ENCODE measurements at regions of chr19 and their contacts with region 1.

Region 1: DNA sequence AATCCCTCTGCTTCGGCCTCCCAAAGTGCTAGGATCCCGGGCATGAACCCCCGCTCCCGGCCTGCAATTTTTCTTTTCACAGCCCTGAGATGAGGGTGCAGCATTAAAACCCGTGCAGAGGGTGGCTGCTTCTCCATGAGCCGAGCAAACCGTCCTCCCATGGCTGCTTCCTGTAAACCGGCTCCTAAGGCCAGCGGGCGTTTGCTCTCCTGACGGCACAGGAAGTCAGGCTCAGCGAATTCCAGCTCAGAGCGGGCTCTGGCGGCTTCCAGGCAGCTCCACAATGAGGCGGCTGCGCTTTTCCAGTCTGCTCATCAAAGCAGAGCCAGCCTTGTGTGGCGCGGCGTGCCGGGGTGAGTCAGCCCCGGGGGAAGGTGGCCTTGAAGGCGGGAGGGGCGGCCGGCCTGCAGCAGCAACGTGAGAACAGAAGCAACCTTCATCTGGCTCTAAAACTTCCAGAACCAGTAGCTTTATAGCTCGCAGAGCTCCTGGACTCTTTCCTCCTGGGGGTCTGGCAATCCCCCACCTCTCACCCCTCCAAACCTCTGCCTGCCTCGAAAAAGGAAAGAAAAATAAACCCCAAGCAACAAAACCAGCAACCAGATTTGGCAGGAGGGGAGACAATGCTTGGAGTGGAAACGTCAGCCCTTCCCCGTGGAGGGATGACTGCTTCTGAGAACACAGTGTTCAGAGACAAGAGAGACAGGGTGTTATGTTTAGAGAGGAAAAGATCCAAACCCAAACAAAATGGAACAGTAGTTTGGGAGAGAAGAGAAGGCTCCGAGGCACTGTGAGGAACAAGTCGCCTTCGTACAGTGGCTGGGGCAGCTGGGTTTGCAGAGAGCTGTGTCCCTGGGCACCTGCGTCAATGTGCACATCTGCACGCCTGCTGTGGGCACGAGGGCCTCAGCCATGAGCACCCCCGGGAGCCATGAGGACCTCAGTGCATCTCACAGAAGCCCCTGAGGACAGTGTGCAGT is 67.8 kb downstream of the GADD45B start:
- DNase-seq: peak; percentile 91
- H3K4me3 ChIP-seq: peak overlapping the region; percentile 42; the same call in 1 of the 2 replicates
- H3K27ac ChIP-seq: peak overlapping the region; percentile 98
- H3K4me1 ChIP-seq: peaks cover 47% of the 10 kb centered on the region
- H3K27me3 ChIP-seq: no peaks in the 10 kb centered on the region
- CTCF ChIP-seq: no peak

Region 2: DNA sequence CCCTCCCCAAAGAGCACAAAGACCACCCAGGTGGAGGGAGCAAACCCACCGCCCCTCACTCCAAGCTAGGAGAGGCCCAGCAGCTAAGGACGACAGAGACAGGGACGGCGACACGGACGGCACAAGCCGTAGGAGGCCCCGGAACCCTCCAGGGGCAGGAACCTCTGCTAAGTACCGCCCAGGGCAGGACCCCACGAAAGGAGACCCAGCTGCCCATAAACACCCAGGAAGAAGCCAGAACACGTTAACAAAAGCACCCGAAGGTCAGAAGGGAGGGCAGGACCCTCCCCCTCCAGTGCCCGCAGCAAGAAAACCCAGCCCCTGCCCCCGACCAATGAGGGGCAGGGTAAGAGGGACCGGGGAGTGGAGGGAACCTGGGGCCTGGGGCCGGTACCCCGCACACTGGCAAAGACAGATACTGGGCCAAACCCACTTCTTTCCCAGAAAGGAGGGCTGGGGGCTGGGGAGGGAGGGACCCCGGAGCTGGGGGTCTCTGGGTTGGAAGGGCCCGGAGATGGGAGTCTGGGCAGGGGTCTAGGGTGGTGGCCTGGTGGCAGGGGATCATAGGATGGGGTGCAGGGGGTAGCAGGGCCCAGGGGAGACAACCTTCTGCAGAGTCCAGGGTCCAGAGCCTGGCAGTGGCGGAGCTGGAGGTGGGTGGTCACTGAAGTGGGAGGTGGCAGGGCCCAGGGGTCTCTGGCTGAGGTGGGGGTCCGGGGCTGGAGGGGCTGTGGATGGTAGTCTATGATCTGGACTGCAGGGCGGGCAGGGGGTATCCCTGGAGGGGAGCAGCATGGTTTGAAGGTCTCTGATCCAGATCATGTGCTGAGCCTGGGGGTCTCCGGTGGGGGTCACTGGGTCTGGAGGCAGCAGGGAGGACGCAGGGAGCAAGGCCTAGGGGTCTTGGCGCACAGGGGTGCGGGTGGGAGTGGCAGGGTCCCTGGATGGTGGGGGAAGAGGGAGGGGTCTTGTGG is 530.5 kb before region 1 on chr19:
- CTCF ChIA-PET with region 1: no interaction called
- POLR2A ChIA-PET with region 1: no interaction called
- intact Hi-C with region 1: no loop called
- DNase-seq: no peak
- H3K4me3 ChIP-seq: no peak overlapping the region
- H3K27ac ChIP-seq: no peak overlapping the region
- H3K4me1 ChIP-seq: no peaks in the 10 kb centered on the region; the same call in 1 of the 2 replicates
- H3K27me3 ChIP-seq: no peaks in the 10 kb centered on the region
- CTCF ChIP-seq: no peak

Region 3: GRCh38 chr19:2494444-2495129 is 49.2 kb before region 1 on chr19:
- CTCF ChIA-PET with region 1: no interaction called
- POLR2A ChIA-PET with region 1: interaction called, 7 read pairs
- intact Hi-C with region 1: loop called (anchors 1 kb)
- DNase-seq: peak; percentile 32 to 50
- H3K4me3 ChIP-seq: peak overlapping the region; percentile 62
- H3K27ac ChIP-seq: peak overlapping the region; percentile 75
- H3K4me1 ChIP-seq: peaks cover 37% of the 10 kb centered on the region
- H3K27me3 ChIP-seq: no peaks in the 10 kb centered on the region
- CTCF ChIP-seq: no peak

Region 4: DNA sequence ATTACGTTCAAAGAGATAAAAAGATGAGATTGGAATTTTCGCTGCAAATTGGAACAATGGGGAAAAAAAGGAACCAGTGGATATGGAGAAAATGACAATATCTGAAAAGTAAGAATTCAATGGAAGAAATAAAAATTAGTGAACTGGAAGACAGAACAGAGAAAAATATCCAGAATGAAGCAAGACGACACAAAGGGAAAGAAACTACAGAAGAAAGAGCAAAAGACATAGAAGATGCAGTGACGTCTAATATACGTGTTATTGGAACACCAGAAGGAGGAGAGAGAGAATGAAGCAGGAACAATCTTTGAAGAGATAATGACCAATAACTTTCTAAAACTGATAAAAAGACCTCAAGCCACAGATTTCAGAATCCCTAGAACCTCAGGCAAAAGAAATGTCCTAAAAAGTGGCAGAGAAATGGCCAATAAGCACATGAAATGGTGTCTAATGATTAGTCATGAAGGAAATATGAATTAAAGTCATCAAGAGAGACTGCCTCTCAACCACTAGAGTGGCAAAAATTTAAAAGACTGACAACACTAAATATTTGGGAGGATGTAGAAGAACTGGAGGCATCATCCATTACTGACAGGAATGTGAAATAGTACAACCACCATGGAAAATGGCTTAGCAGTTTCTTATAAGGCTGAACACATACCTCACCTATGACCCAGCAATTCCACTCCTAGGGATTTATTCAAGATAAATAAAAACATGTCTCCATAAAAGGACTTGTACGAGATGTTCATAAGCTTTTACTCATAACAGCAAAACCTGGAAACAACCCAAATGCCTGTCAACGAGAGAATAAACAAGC is 11.3 kb before region 1 on chr19:
- CTCF ChIA-PET with region 1: interaction called, 3 read pairs
- POLR2A ChIA-PET with region 1: interaction called, 10 read pairs
- intact Hi-C with region 1: loop called (anchors 1 kb)
- DNase-seq: peak in 1 of 2 experiments; percentile 96
- H3K4me3 ChIP-seq: no peak overlapping the region
- H3K27ac ChIP-seq: peak overlapping the region; percentile 99
- H3K4me1 ChIP-seq: peaks cover 74% of the 10 kb centered on the region
- H3K27me3 ChIP-seq: no peaks in the 10 kb centered on the region
- CTCF ChIP-seq: no peak

Region 5: DNA sequence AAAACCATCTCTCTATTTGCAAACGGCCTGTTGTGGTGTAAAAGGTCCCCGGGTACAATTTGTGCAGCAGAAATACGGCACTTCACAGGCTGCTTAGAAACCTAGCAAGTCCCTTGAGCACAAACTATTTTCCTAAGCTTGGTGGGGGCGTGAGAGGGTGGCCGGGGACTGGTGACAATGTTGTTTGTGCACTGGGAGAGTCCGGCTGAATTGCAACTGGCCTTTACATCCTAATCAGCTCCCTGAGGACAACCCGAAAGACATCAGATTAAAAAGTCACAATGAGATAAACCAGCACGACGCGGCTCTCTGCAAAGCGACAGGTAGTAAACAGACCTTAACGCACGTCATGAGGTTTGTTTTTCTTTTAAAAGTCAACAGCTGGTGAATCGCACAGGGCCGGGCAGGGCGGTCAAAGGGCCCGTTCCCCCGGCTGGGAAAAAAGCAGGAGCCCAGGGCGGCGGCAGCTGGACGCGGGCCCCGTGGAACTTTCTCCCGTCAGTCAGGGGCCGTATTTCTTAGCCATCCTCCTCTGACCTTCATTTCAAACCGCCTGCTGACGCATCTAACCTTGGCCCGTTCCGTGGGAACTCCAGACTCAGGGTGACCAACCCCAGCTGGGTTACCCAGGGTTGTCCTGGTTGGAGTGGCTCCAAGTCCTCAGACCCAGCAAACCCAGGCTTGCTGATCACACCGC is 44.5 kb after region 1 on chr19:
- CTCF ChIA-PET with region 1: no interaction called
- POLR2A ChIA-PET with region 1: no interaction called
- intact Hi-C with region 1: no loop called
- DNase-seq: no peak
- H3K4me3 ChIP-seq: no peak overlapping the region
- H3K27ac ChIP-seq: no peak overlapping the region
- H3K4me1 ChIP-seq: no peaks in the 10 kb centered on the region
- H3K27me3 ChIP-seq: no peaks in the 10 kb centered on the region
- CTCF ChIP-seq: no peak

Region 6: GRCh38 chr19:2602391-2603181 is 58.8 kb after region 1 on chr19:
- CTCF ChIA-PET with region 1: interaction called, 10 read pairs
- POLR2A ChIA-PET with region 1: no interaction called
- intact Hi-C with region 1: no loop called
- DNase-seq: peak; percentile 56 to 59
- H3K4me3 ChIP-seq: peak overlapping the region; percentile 26; the same call in 1 of the 2 replicates
- H3K27ac ChIP-seq: no peak overlapping the region
- H3K4me1 ChIP-seq: no peaks in the 10 kb centered on the region
- H3K27me3 ChIP-seq: no peaks in the 10 kb centered on the region
- CTCF ChIP-seq: no peak

Region 7: DNA sequence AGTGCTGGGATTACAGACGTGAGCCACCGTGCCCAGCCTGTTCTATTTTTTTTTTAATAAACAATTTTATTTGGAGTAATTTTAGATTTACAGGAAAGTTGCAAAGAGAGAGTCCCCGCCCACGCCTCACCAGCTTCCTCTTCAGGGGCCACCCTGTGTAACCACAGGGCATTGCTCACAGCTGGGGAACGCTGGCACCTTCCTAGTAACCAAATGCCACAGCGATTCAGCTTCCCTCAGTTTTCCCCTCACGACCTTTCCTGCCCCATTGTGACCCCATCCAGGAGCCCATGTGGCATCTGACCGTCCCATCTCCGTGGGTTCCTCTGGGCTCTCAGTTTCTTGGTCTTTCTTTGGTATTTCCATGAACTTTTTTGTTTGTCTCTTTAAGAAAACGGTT is 74.9 kb after region 1 on chr19:
- CTCF ChIA-PET with region 1: no interaction called
- POLR2A ChIA-PET with region 1: interaction called, 19 read pairs
- intact Hi-C with region 1: loop called (anchors 5 kb)
- DNase-seq: peak; percentile 67 to 70
- H3K4me3 ChIP-seq: no peak overlapping the region
- H3K27ac ChIP-seq: peak overlapping the region; percentile 69
- H3K4me1 ChIP-seq: peaks cover 16% of the 10 kb centered on the region
- H3K27me3 ChIP-seq: no peaks in the 10 kb centered on the region
- CTCF ChIP-seq: no peak